ENCODE measurements at regions of chr6 and their contacts with region 1.

Region 1: DNA sequence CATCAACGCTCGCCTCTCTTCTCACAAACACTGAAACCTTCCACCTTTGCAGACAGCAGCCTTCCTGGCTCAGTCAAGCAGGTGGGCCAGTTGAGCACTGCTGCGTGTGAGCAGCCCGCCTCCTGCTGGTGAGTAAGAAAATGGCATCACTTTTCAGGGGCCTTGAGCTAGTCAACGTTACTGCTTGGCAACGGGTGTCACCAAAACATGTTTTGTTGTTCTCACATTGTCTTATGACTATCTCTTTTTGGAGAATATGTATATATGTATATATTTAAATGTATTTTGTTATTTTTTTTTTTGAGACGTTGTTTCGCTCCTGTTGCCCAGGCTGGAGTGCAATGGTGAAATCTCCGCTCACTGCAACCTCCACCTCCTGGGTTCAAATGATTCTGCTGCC is 97.0 kb upstream of the AGPAT4 start:
- DNase-seq: peak; percentile 79
- H3K4me3 ChIP-seq: no peak overlapping the region; a peak in 1 of 4 replicates
- H3K27ac ChIP-seq: no peak overlapping the region
- H3K4me1 ChIP-seq: peaks cover 0 to 10% of the 10 kb centered on the region in 2 experiments; a peak in 1 of 4 replicates
- H3K27me3 ChIP-seq: no peaks in the 10 kb centered on the region
- CTCF ChIP-seq: peak; percentile 95
- EP300 ChIP-seq: no peak
- RAD21 ChIP-seq: peak; percentile 95

Region 2: DNA sequence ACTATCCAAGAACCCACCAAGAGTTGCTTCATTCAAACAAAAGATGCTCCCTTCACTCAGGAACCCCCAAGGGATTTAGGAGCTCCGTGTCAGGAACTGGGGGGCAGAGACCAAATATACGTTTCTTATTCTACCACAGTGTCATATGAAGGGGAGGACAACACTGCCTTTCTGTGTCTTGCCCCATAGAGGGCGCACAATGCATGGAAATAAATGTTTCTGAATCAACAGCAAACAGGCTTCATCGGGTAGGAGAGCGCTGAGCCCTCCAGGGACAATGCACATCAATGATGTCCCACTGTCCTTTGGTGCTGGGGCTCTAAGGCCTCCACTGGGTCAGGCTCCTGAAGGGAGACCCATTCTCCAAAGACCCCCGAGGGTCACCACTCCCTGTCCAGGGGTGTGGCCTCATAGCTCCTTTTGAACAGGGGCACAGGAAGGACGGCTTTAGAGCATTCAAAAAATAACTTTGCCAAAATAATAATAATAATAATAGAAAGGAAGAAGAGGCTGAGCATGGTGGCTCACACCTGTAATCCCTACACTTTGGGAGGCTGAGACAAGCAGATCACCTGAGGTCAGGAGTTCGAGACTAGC is 637.7 kb before region 1 on chr6:
- CTCF ChIA-PET with region 1: interaction called, 31 read pairs
- POLR2A ChIA-PET with region 1: no interaction called
- DNase-seq: peak; percentile 35
- H3K4me3 ChIP-seq: peak overlapping the region in 1 of 2 experiments; percentile 20; a peak in 1 of 4 replicates
- H3K27ac ChIP-seq: no peak overlapping the region
- H3K4me1 ChIP-seq: no peaks in the 10 kb centered on the region
- H3K27me3 ChIP-seq: peaks cover 7% of the 10 kb centered on the region; the same call in 1 of the 2 replicates
- CTCF ChIP-seq: peak; percentile 73
- EP300 ChIP-seq: no peak
- RAD21 ChIP-seq: peak; percentile 77

Region 3: GRCh38 chr6:160940197-160940596 is 430.7 kb before region 1 on chr6:
- CTCF ChIA-PET with region 1: interaction called, 380 read pairs
- POLR2A ChIA-PET with region 1: no interaction called
- DNase-seq: no peak
- H3K4me3 ChIP-seq: no peak overlapping the region
- H3K27ac ChIP-seq: no peak overlapping the region
- H3K4me1 ChIP-seq: no peaks in the 10 kb centered on the region
- H3K27me3 ChIP-seq: no peaks in the 10 kb centered on the region
- CTCF ChIP-seq: no peak
- EP300 ChIP-seq: no peak
- RAD21 ChIP-seq: no peak

Region 4: DNA sequence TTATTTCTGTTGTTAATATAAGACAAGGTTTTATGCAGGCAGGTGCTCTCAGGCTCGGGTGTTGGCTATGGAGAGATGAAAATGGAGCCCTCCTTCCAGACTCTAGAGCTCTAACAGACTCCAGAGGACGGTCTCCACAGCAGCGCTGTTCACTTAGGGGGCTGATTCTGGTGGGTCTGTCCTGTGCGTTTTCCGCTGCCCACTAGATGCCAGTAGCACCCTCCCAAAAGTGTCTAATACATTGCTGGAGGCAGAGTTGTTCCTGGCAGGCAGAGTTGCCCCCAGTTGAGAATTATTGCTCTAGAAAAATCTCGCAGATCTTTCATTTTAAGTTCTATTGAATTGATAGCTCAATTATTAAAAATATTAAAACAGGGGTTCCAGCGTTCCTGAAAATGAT is 269.4 kb before region 1 on chr6:
- CTCF ChIA-PET with region 1: interaction called, 81 read pairs
- POLR2A ChIA-PET with region 1: no interaction called
- DNase-seq: peak; percentile 43
- H3K4me3 ChIP-seq: no peak overlapping the region; a peak in 1 of 4 replicates
- H3K27ac ChIP-seq: no peak overlapping the region
- H3K4me1 ChIP-seq: peaks cover 0 to 5% of the 10 kb centered on the region in 2 experiments; a peak in 1 of 4 replicates
- H3K27me3 ChIP-seq: no peaks in the 10 kb centered on the region
- CTCF ChIP-seq: peak; percentile 51
- EP300 ChIP-seq: no peak
- RAD21 ChIP-seq: peak; percentile 61

Region 5: DNA sequence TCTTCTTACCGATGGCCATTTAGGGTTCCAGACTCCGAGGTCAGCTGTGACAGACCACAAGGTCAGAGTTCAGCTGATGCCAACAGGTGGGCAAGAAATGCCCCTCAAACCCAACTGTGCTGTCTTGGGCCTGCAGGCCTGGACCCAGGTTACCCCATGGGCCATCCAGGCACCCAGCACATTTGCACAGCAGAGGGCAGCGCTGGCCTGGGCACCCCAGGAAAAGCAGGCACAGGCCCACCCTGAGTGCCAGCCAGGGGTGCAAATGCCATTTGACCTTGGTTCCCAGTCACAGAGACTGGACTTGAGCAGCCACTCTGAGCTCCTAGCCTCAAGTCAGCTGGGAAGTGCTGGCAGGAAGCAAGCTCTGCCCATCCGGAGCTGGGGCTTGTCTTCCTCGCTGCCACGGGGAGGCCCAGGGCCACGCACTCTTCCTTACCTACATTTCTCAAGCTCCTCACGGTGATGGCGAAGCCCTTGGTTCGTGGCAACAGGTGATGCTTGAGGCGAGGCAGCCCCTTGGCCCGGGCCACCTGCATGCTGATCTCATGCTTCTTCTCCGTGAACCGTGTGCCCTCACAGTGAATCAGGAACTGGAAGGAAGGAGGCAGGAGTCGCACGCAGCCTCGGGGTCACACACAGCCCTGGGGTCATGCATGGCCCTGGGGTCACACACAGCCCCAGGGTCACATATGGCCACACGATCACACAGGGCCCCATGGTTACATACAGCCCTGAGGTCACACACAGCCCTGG is 217.8 kb before region 1 on chr6:
- CTCF ChIA-PET with region 1: interaction called, 43 read pairs
- POLR2A ChIA-PET with region 1: no interaction called
- DNase-seq: peak; percentile 67
- H3K4me3 ChIP-seq: no peak overlapping the region
- H3K27ac ChIP-seq: no peak overlapping the region
- H3K4me1 ChIP-seq: no peaks in the 10 kb centered on the region
- H3K27me3 ChIP-seq: no peaks in the 10 kb centered on the region
- CTCF ChIP-seq: peak; percentile 64
- EP300 ChIP-seq: no peak
- RAD21 ChIP-seq: peak; percentile 66

Region 6: GRCh38 chr6:161303628-161304340 is 67.1 kb before region 1 on chr6:
- CTCF ChIA-PET with region 1: no interaction called
- POLR2A ChIA-PET with region 1: no interaction called
- DNase-seq: no peak
- H3K4me3 ChIP-seq: no peak overlapping the region
- H3K27ac ChIP-seq: peak overlapping the region in 1 of 2 experiments; percentile 36; a peak in 2 of 4 replicates
- H3K4me1 ChIP-seq: peaks cover 0 to 4% of the 10 kb centered on the region in 2 experiments; a peak in 1 of 4 replicates
- H3K27me3 ChIP-seq: no peaks in the 10 kb centered on the region
- CTCF ChIP-seq: no peak
- EP300 ChIP-seq: no peak; a peak in 1 of 4 replicates
- RAD21 ChIP-seq: no peak

Region 7: GRCh38 chr6:161353208-161353613 is 17.7 kb before region 1 on chr6:
- CTCF ChIA-PET with region 1: interaction called, 28 read pairs
- POLR2A ChIA-PET with region 1: no interaction called
- DNase-seq: peak; percentile 52
- H3K4me3 ChIP-seq: no peak overlapping the region
- H3K27ac ChIP-seq: no peak overlapping the region
- H3K4me1 ChIP-seq: no peaks in the 10 kb centered on the region
- H3K27me3 ChIP-seq: no peaks in the 10 kb centered on the region
- CTCF ChIP-seq: peak; percentile 23; the same call in 1 of the 2 replicates
- EP300 ChIP-seq: no peak
- RAD21 ChIP-seq: peak; percentile 47

Region 8: DNA sequence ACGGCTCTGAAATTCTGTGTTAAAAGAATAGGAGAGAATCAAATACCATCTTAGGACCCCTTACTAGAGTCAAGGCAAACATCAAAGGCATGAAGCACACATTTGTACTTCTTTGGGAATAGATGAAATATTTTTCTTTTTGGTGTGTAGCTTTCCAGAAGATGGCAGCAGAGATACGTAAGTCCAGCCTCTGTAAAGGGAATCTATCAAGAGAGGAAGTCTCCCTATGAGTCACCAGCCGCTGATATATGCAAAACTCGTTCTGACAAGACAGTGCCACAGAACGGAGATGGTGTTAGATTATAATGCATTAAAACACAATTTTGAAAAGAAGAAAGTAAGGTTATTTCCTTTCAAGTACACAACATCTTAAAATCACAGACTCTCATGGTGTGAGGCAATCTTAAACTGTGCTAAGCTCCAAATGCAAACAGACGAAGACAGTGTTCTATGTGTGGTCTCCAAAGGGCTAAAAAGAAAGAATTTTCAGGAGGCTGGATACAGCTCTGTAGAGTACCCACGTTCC is 23.0 kb after region 1 on chr6:
- CTCF ChIA-PET with region 1: interaction called, 19 read pairs
- POLR2A ChIA-PET with region 1: no interaction called
- DNase-seq: peak; percentile 66
- H3K4me3 ChIP-seq: peak overlapping the region in 1 of 2 experiments; percentile 16; a peak in 1 of 4 replicates
- H3K27ac ChIP-seq: no peak overlapping the region
- H3K4me1 ChIP-seq: peaks cover 0 to 14% of the 10 kb centered on the region in 2 experiments; a peak in 1 of 4 replicates
- H3K27me3 ChIP-seq: 0 out of 2 replicates have a peak, but pooled peaks cover 4% of the 10 kb centered on the region
- CTCF ChIP-seq: peak; percentile 78
- EP300 ChIP-seq: no peak
- RAD21 ChIP-seq: peak; percentile 94

Measured in SK-N-SH (cell line).